Activated T-helper 1 cell treated with anti-CD3 and anti-CD28 coated beads, Interleukin-12 subunit alpha, Interleukin-12 subunit beta, Interleukin-2, Interleukin-4 antibody, amounts not matched to agents 30 ng/mL and 10 ng/mL and 1 ng/mL, durations not matched to agents 14 hours and 24 hours and 36 hours (primary cell): ENCODE measurements at regions of chr4 and their contacts with region 1.

Region 1: GRCh38 chr4:26197018-26197779 is 123.6 kb upstream of the RBPJ start:
- DNase-seq: peak; percentile 77
- H3K4me3 Mint-ChIP-seq: peak overlapping the region; percentile 71
- H3K27ac Mint-ChIP-seq: peak overlapping the region; percentile 95
- H3K4me1 Mint-ChIP-seq: peaks cover 93% of the 10 kb centered on the region
- H3K27me3 Mint-ChIP-seq: no peaks in the 10 kb centered on the region

Region 2: GRCh38 chr4:26009502-26009901 is 187.7 kb before region 1 on chr4:
- intact Hi-C with region 1: loop called (anchors 1 kb)
- DNase-seq: no peak
- H3K4me3 Mint-ChIP-seq: no peak overlapping the region
- H3K27ac Mint-ChIP-seq: peak overlapping the region; percentile 11
- H3K4me1 Mint-ChIP-seq: peaks cover 12% of the 10 kb centered on the region
- H3K27me3 Mint-ChIP-seq: peaks cover 10% of the 10 kb centered on the region

Region 3: GRCh38 chr4:26076000-26076587 is 121.1 kb before region 1 on chr4:
- intact Hi-C with region 1: loop called (anchors 1 kb)
- DNase-seq: peak; percentile 63
- H3K4me3 Mint-ChIP-seq: peak overlapping the region; percentile 64
- H3K27ac Mint-ChIP-seq: peak overlapping the region; percentile 92
- H3K4me1 Mint-ChIP-seq: peaks cover 86% of the 10 kb centered on the region
- H3K27me3 Mint-ChIP-seq: no peaks in the 10 kb centered on the region

Region 4: GRCh38 chr4:26130173-26130572 is 67.0 kb before region 1 on chr4:
- intact Hi-C with region 1: loop called (anchors 1 kb)
- DNase-seq: no peak
- H3K4me3 Mint-ChIP-seq: no peak overlapping the region
- H3K27ac Mint-ChIP-seq: peak overlapping the region; percentile 65
- H3K4me1 Mint-ChIP-seq: peaks cover 81% of the 10 kb centered on the region
- H3K27me3 Mint-ChIP-seq: no peaks in the 10 kb centered on the region

Region 5: GRCh38 chr4:26179316-26179760 is 17.9 kb before region 1 on chr4:
- intact Hi-C with region 1: loop called (anchors 1 kb)
- DNase-seq: no peak
- H3K4me3 Mint-ChIP-seq: no peak overlapping the region
- H3K27ac Mint-ChIP-seq: peak overlapping the region; percentile 64
- H3K4me1 Mint-ChIP-seq: peaks cover 44% of the 10 kb centered on the region
- H3K27me3 Mint-ChIP-seq: no peaks in the 10 kb centered on the region

Region 6: DNA sequence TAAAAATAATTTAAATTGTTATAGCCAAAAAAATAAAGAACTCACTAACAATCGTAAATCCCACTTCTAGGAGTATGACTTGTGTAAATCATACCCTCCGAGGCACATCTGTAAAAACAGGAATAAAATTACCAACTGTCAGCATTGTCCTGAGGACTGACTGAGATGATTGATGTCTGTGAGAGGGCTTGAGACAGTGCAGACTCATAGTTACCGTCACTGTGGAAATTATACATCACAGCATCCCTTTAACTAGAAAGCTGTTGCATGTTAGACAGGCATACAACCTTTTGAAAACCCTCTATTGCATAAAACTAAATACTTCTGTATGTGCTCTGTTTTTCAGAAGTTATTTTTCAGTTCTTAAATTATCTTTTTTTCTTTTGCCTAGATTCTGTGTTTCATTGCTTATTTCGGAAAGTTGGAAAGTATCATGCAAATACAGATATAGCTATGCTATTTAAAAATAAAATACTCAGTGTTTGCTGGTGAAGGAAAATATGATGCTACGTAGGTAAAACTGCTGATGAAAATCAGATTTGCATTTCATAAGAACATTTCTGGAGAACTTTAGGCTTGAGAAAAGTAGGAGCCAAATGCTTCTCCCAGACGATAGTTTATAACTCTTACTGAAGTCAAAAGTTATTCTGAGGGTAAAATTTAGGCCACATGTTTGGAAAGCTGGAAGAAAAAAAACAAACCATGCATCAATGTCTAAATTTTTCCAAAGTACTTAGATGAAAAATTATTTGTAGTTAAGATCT is 110.0 kb after region 1 on chr4:
- intact Hi-C with region 1: loop called (anchors 1 kb)
- DNase-seq: no peak
- H3K4me3 Mint-ChIP-seq: peak overlapping the region; percentile 23
- H3K27ac Mint-ChIP-seq: peak overlapping the region; percentile 88
- H3K4me1 Mint-ChIP-seq: peaks cover 36% of the 10 kb centered on the region
- H3K27me3 Mint-ChIP-seq: no peaks in the 10 kb centered on the region

Region 7: DNA sequence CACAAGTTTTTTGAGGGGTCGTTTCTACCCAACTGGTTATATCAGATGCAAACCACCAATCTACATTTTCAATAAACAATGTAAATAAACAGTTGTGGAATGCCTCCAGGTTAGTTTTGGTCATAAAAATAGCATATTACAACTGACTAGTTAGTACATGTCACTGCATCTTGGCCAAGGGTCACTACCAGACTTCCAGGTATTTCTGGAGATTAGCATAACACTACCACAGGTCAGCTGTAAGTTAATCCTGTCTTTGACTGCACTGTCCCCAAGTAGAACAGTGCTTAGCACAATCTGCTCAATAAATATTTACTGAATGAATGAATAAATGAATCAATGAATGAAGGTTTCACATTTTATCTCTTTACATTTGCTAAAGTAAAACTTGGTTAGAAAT is 451.1 kb after region 1 on chr4:
- intact Hi-C with region 1: no loop called
- DNase-seq: no peak
- H3K4me3 Mint-ChIP-seq: no peak overlapping the region
- H3K27ac Mint-ChIP-seq: no peak overlapping the region
- H3K4me1 Mint-ChIP-seq: no peaks in the 10 kb centered on the region
- H3K27me3 Mint-ChIP-seq: no peaks in the 10 kb centered on the region

Region 8: GRCh38 chr4:26885912-26886274 is 688.7 kb after region 1 on chr4:
- intact Hi-C with region 1: loop called (anchors 2 kb)
- DNase-seq: peak; percentile 43
- H3K4me3 Mint-ChIP-seq: peak overlapping the region; percentile 69
- H3K27ac Mint-ChIP-seq: peak overlapping the region; percentile 91
- H3K4me1 Mint-ChIP-seq: peaks cover 77% of the 10 kb centered on the region
- H3K27me3 Mint-ChIP-seq: no peaks in the 10 kb centered on the region